ENCODE measurements at regions of chr17 and their contacts with region 1.

Region 1: DNA sequence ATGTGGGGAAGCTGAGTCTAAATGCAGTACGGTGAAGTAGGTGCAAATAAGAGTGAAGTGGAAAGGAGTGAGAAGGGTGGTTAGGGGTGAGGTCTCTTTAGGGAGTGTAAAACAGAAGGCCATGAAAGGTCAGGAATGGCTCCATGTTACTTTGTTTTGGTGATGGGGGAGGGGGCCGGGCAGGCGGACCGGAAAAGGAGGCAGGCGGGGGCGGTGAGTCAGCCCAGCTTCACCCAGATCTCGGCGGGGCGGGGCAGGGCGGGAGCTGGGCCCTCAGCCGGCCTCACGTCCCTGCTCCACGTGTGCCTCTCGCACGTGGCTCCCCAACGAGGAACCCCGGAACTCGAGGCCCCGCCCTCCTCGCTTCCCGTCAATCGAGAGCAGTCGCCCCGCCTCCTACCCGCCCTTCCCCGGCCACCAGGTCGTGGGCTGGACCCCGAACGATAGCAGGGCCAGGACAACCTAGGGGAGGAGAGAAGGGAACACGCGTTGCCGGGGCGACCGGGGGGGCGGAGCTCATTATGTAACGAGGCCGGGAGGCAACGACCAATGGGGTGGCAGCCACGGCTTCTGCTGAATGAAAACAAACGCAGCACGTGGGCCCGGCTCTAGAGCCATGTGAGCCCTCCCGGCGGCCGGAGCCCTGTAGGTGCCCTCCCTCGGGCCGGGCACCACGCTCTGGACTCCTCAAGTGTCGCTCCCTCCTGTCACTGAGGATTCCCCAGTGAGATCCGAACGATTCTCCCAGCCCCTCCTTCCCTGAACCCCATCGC is 1.4 kb downstream of the NR1D1 start:
- DNase-seq: peak; percentile 99 to 100 (median 99)
- H3K4me3 ChIP-seq: peak overlapping the region; percentile 94
- H3K4me3 Mint-ChIP-seq: peak overlapping the region; percentile 82 to 99 (median 95)
- H3K27ac ChIP-seq: peak overlapping the region; percentile 88
- H3K27ac Mint-ChIP-seq: peak overlapping the region; percentile 81 to 100 (median 95)
- H3K4me1 ChIP-seq: peaks cover 87% of the 10 kb centered on the region
- H3K4me1 Mint-ChIP-seq: peaks cover 78 to 94% (median 86%) of the 10 kb centered on the region in 3 donors
- H3K27me3 ChIP-seq: no peaks in the 10 kb centered on the region
- H3K27me3 Mint-ChIP-seq: peaks cover 0 to under 1% of the 10 kb centered on the region in 2 donors

Region 2: DNA sequence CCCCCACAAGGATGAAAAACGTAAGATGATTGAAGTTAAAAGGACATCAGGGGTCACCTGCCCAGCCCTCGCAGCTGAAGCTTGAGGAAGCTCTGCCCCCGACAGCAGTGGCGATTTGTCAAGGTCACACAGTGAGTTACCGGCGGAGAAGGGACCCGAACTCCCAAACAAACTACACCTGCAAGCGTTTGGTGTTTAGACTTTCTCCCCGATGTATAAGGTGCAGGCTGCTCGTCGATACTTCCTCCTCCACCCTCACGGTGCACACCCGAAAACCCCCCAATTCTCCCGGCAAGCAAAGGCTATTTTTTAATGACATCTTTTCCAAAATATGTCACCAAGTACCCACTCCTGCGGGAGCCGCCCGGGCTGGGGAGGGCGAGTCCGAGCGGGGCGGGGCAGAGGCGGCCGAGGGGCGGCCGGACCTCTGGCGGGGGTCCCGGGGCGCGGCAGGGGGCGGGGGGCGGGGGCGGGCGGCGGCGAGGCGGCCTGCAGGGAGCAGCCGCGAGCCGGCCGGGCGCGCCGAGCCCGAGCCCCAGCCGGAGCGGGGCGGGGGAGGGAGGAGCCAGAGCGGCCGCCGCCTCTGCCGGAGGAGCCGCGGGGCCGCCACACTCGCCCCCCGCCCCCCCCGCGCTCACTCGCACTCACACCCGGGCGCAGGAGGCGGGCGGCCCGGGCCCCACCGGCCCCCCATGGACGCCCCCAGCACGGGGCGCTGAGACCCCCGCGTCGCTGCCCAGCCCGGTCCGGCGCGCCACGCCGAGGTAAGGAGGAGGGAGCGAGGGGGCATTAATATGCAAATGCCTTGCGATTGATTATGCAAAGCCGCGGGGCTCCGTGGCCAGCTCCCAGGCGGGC is 36.5 kb before region 1 on chr17 and contains the start of gene THRA:
- CTCF ChIA-PET with region 1: interaction called, 18 read pairs
- POLR2A ChIA-PET with region 1: interaction called, 5 read pairs
- DNase-seq: peak; percentile 64 to 81 (median 70)
- H3K4me3 ChIP-seq: peak within 1 kb of the TSS; percentile 81
- H3K4me3 Mint-ChIP-seq: peak within 1 kb of the TSS; percentile 88 to 97 (median 91)
- H3K27ac ChIP-seq: peak within 1 kb of the TSS; percentile 73
- H3K27ac Mint-ChIP-seq: peak within 1 kb of the TSS; percentile 80 to 97 (median 90)
- H3K4me1 ChIP-seq: peaks cover 46% of the 10 kb centered on the region
- H3K4me1 Mint-ChIP-seq: peaks cover 37 to 49% (median 41%) of the 10 kb centered on the region in 3 donors
- H3K27me3 ChIP-seq: no peaks in the 10 kb centered on the region
- H3K27me3 Mint-ChIP-seq: peaks cover 0 to 2% of the 10 kb centered on the region in 2 donors
- total RNA-seq, gene THRA: 12.6 to 13.2 TPM

Region 3: DNA sequence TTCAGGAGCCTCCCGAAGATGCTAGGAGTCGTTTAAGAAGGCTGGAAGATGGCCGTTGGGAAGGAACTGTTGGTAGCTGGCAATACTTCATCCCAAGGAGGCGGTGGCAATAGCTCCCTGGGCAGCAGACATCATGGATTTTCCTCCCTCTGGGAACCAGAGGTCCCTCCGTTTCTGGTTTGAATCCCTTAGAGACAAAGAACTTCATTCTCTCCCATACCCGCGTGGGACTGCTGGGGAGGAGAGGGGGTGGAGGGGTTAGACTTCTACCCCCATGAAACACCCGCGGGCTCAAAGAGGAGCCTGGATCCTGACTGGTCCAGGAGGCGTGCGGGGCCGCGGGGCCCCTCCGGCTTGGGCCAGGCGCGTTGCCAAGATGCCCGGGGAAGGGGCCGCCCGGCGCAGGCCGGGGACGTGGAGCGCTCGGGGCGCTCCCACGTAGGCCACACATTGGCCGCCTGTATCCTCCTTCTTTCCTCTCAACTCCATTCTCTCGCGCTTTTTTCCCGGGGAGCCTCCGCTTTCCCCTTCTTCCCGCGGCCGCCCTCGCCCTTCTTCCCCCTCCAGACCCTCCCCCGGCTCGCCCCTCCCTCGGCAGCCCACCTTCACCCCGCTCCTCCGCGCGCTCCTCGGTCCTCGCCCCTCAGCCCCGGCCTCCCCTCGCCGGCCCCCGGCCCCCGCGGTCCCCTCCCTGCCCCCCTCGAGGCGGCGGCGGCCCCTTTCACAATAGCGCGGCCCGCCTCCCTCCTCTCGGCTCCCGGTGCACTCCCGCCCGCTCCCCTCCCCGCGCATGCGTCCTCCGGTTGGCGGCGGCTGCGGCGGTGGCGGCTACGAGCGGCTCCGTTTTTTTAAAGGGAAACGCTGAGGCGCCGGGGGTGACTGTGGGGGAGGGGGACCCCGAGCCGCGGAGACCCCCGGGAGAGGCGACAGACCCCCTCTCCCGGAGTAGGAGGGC is 22.4 kb after region 1 on chr17 and contains the start of gene MSL1:
- CTCF ChIA-PET with region 1: interaction called, 3 read pairs
- POLR2A ChIA-PET with region 1: interaction called, 14 read pairs
- DNase-seq: peak; percentile 84 to 90 (median 85)
- H3K4me3 ChIP-seq: peak within 1 kb of the TSS; percentile 93
- H3K4me3 Mint-ChIP-seq: peak within 1 kb of the TSS; percentile 83 to 96 (median 90)
- H3K27ac ChIP-seq: peak within 1 kb of the TSS; percentile 40
- H3K27ac Mint-ChIP-seq: peak within 1 kb of the TSS; percentile 74 to 96 (median 89)
- H3K4me1 ChIP-seq: peaks cover 32% of the 10 kb centered on the region
- H3K4me1 Mint-ChIP-seq: peaks cover 32 to 49% (median 36%) of the 10 kb centered on the region in 3 donors
- H3K27me3 ChIP-seq: no peaks in the 10 kb centered on the region
- H3K27me3 Mint-ChIP-seq: peaks cover 0 to 1% of the 10 kb centered on the region in 2 donors
- total RNA-seq, gene MSL1: 88.6 to 91.5 TPM

Region 4: DNA sequence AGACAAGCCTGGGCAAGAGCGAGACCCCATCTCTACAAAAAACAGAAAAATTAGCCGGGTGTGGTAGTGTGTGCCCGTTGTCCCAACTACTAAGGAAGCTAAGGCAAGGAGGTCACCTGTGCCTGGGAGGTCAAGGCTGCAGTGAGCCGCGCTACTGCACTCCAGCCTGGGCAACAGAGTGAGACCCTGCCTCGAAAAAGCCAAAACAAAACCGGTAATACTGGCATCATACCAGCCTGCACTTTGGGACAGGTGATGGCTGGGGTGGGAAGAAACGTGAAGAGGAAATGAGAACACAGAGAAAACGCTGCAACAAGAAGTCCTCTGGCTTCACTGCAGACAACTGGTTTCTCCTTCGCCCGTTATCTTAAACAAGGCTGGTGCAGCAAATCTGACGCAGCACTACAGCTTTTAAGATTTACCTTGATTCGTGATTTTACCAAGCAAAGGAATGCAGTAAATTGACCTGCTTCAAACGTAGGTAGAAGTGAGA is 40.6 kb after region 1 on chr17:
- CTCF ChIA-PET with region 1: interaction called, 6 read pairs
- POLR2A ChIA-PET with region 1: interaction called, 23 read pairs
- DNase-seq: no peak
- H3K4me3 ChIP-seq: peak overlapping the region; percentile 82
- H3K4me3 Mint-ChIP-seq: peak overlapping the region; percentile 90 to 95 (median 95)
- H3K27ac ChIP-seq: peak overlapping the region; percentile 95
- H3K27ac Mint-ChIP-seq: peak overlapping the region; percentile 97 to 100 (median 98)
- H3K4me1 ChIP-seq: peaks cover 26% of the 10 kb centered on the region
- H3K4me1 Mint-ChIP-seq: peaks cover 29 to 50% (median 37%) of the 10 kb centered on the region in 3 donors
- H3K27me3 ChIP-seq: no peaks in the 10 kb centered on the region
- H3K27me3 Mint-ChIP-seq: peaks cover 0 to 6% of the 10 kb centered on the region in 2 donors